ENCODE measurements at regions of chr12 and their contacts with region 1.

Region 1: DNA sequence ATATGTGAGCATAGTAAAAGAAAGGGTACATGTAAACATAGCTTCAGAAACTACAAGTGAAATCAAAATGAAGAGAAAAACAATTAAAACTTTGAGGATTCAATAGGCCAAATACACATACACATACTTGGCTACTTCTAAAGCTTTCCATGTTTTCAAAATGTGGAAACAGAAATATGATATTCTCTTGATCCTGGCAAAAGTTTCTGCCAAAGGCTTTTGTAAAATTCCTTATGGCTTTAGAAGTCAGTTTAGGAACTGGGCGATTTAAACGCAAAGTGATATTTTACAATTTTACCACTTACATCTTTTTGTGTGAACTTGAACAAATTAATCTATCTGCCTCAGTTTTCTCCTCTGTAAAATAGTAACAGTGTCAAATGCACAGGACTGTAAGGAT is 756.4 kb downstream of the C12orf50 start:
- DNase-seq: no peak
- ATAC-seq: no peak
- H3K4me3 ChIP-seq: no peak overlapping the region
- H3K27ac ChIP-seq: no peak overlapping the region
- H3K4me1 ChIP-seq: no peaks in the 10 kb centered on the region
- H3K27me3 ChIP-seq: no peaks in the 10 kb centered on the region
- CTCF ChIP-seq: no peak

Region 2: DNA sequence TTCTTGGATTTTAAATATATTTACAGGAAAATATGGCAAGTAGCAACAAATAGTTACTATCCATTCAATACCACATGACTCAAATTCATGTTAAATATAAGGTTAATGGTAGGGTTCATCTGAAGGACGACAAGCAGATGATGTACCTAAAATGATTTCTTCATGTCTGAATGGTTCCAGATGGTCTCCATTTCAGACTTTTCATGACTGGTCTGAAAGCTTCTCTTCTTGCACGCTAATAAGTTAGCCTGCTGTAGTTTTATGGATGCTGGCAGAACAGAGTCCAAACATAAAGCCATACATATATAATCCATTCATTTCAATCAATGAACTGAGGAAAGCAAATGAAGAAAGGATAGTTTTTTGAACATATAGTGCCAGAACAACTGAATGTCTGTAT is 759.6 kb before region 1 on chr12:
- CTCF ChIA-PET with region 1: no interaction called
- POLR2A ChIA-PET with region 1: interaction called, 11 read pairs
- in situ Hi-C with region 1: no loop called
- intact Hi-C with region 1: no loop called
- DNase-seq: no peak
- ATAC-seq: no peak
- H3K4me3 ChIP-seq: no peak overlapping the region
- H3K27ac ChIP-seq: no peak overlapping the region
- H3K4me1 ChIP-seq: no peaks in the 10 kb centered on the region
- H3K27me3 ChIP-seq: no peaks in the 10 kb centered on the region
- CTCF ChIP-seq: no peak

Measured in Panc1 (cell line).